ENCODE measurements at regions of chr1 and their contacts with region 1.

Region 1: GRCh38 chr1:221667504-221667903 is 74.4 kb downstream of the DUSP10 start:
- DNase-seq: no peak
- H3K4me3 Mint-ChIP-seq: no peak overlapping the region
- H3K27ac Mint-ChIP-seq: no peak overlapping the region
- H3K4me1 Mint-ChIP-seq: peaks cover 6% of the 10 kb centered on the region
- H3K27me3 Mint-ChIP-seq: peaks cover 23% of the 10 kb centered on the region

Region 2: DNA sequence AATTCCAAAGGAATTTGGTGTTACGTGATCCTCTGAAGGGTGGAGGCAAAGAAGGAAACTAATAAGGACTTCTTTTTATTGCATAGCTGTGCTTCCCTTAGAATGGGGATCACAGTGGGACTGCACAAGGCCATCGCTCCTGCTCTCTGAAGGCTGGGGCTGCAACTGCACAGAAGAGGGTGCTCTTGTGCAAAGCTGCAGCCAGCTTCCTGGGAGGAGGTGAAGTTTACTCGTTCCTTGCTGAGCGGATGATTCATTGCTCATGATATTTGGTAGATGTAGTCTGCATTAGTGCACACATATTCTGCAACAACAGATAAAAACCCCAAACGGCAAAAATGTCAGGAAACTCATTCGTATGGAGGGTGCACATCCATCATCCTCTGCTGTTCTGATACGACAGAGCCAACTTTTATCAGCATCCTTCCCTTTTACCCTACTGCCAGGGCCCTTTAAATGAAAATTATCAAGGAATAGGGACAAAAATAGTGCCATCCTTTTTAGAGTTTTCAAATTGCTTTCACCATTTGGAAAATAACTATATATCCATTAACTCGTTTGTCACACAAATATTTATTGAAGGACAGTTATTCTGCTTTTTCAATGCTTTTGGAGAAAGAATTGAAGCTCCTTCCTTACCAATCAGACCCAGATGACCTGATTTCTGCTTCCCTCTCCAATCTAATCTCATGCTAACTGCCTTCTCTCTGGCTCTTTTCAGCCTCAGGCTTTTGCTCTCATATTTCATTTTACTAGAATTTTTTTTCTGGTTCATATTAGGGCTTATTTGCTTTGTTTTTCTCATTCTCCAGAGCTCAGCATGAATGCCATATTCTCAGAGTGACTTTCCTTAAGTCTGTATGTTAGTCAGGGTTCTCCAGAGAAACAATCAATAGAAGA is 189.2 kb before region 1 on chr1:
- intact Hi-C with region 1: no loop called
- DNase-seq: peak; percentile 11
- H3K4me3 Mint-ChIP-seq: no peak overlapping the region
- H3K27ac Mint-ChIP-seq: no peak overlapping the region
- H3K4me1 Mint-ChIP-seq: peaks cover 2% of the 10 kb centered on the region
- H3K27me3 Mint-ChIP-seq: peaks cover 18% of the 10 kb centered on the region

Region 3: DNA sequence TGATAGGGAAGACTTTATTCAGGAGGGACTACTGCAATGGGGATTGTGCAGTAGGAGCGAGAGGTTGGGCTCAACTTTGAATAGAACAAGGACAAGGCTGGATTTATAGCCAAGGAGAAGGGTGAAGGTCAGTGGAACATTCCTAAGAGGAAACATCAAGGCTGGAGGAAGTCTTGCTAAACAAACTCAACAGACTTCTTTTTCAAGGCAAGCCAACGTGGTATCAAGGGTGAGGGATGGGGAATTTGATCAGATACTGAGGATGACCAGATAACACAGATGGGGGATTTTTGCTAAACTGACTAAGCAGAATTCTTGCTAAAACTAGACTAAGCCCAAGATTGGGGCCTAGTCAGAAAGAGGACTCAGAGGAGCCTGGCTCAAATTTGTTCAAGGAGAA is 32.9 kb before region 1 on chr1:
- intact Hi-C with region 1: loop called (anchors 5 kb)
- DNase-seq: no peak
- H3K4me3 Mint-ChIP-seq: no peak overlapping the region
- H3K27ac Mint-ChIP-seq: no peak overlapping the region
- H3K4me1 Mint-ChIP-seq: peaks cover 14% of the 10 kb centered on the region
- H3K27me3 Mint-ChIP-seq: no peaks in the 10 kb centered on the region

Measured in activated T-helper 2 cell treated with anti-CD3 and anti-CD28 coated beads, Interferon-gamma antibody, Interleukin-2, Interleukin-4, amounts not matched to agents 10 μg/mL and 5 μg/mL and 100 μg/mL, durations not matched to agents 14 hours and 24 hours and 36 hours (primary cell).